OCI-LY7 (cell line): ENCODE measurements at regions of chr5 and their contacts with region 1.

Region 1: GRCh38 chr5:37751227-37751626 is 88.6 kb downstream of the GDNF start:
- DNase-seq: no peak
- H3K4me3 ChIP-seq: no peak overlapping the region
- H3K27ac ChIP-seq: no peak overlapping the region
- H3K4me1 ChIP-seq: no peaks in the 10 kb centered on the region
- CTCF ChIP-seq: no peak

Region 2: DNA sequence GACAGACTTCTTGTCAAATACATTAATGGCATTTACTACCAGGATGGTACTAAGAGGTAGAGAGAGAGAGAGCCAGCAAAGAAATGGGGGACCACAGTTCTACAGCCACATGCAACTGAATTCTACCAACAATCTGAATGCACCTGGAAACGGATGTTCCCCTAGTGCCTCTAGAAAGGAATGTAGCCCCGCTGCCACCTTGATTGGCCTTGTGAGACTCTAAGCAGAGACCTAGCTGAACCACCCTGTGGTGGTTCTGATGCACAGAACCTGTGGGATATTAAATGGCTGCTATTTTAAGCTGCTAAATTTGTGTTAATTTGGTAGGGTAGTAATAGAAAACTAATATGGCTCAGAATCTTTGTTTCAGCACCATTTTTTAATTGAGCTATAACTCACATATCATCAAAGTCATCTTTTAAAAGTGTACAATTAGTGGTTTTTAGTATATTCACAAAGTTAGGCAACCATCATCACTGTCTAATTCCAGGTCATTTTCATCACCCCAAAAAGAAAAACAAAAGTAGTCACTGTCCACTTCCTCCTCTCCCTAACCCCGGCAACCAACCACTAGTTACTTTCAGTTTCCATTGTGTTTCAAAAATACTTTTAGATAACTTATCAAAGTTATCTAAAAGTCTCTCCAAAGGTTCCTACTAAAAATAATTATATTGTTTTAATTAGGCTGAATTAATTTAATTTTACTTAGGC is 553.7 kb before region 1 on chr5:
- CTCF ChIA-PET with region 1: no interaction called
- POLR2A ChIA-PET with region 1: no interaction called
- intact Hi-C with region 1: no loop called
- DNase-seq: peak; percentile 8
- H3K4me3 ChIP-seq: peak overlapping the region; percentile 34
- H3K27ac ChIP-seq: no peak overlapping the region
- H3K4me1 ChIP-seq: peaks cover 7% of the 10 kb centered on the region
- CTCF ChIP-seq: no peak

Region 3: GRCh38 chr5:37520811-37521210 is 230.4 kb before region 1 on chr5:
- CTCF ChIA-PET with region 1: no interaction called
- POLR2A ChIA-PET with region 1: interaction called, 11 read pairs
- intact Hi-C with region 1: no loop called
- DNase-seq: no peak
- H3K4me3 ChIP-seq: no peak overlapping the region
- H3K27ac ChIP-seq: no peak overlapping the region
- H3K4me1 ChIP-seq: no peaks in the 10 kb centered on the region
- CTCF ChIP-seq: no peak

Region 4: DNA sequence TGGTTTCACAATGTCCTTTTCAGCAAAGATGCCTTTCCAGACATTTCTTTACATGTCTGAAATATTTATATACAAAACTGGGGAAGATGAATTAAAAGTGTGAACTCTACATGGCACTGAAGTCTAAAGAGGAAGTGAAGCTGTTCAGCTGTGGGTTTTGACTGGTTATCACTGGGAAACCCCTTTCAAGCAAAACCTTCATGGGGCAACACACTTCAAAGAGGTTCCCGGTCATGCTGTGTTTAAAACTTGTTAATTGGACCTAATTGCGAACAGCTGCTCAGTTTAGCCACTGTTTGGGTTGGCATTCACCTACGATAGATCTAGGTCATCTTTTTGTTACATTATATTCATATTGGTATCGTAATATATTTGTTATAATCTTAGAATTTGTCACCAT is 108.6 kb after region 1 on chr5:
- CTCF ChIA-PET with region 1: no interaction called
- POLR2A ChIA-PET with region 1: no interaction called
- intact Hi-C with region 1: no loop called
- DNase-seq: peak; percentile 32
- H3K4me3 ChIP-seq: no peak overlapping the region
- H3K27ac ChIP-seq: no peak overlapping the region
- H3K4me1 ChIP-seq: no peaks in the 10 kb centered on the region
- CTCF ChIP-seq: no peak